Activated naive CD4-positive, alpha-beta T cell treated with anti-CD3 and anti-CD28 coated beads for 36 hours (primary cell): ENCODE measurements at regions of chr2 and their contacts with region 1.

Region 1: DNA sequence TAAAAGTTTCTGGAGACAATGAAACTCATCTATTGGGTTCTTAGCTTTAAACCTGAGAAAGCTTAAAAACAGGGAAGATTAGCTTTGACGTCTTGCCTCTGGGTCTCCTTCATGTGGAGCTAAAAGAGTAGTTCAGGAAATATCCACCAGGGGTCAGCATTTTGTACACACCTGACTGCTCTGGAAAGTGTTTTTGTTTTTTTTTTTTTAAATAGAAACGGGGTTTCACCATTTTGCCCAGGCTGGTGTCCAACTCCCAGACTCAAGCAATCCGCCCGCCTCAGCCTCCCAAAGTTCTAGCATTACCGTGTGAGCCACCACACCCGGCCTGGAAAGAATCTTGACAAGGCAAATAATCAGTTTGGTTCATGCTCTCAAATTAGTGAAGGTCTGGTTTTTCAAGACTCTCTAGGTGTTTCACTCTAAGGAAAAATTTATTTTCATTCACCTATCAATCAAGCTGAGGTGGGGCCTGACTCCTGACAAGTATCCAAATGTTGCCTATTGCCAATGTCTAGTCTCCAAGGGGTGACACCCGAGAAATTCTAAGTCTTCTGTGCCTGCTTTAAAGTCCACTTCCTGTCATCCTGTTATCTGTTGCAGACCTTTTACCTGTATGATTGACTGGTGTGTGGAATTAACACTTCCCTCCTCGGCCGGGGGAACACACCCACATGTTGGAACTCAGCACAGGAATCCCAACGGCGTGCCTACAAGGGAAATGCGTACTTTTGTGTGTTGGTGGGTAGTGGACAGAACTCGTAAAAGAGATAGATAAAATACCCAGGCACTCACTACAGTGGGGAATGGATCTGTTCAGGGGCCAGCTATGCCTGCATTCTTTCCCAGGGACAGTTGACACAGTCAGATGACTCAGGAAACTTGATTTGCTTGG is 11.3 kb downstream of the IL1RN start:
- DNase-seq: peak; percentile 65
- H3K4me3 Mint-ChIP-seq: peak overlapping the region; percentile 25
- H3K27ac Mint-ChIP-seq: peak overlapping the region; percentile 30
- H3K4me1 Mint-ChIP-seq: peaks cover 29% of the 10 kb centered on the region
- H3K27me3 Mint-ChIP-seq: no peaks in the 10 kb centered on the region

Region 2: GRCh38 chr2:112032689-112033465 is 1105.8 kb before region 1 on chr2:
- CTCF ChIA-PET with region 1: no interaction called
- intact Hi-C with region 1: no loop called
- DNase-seq: no peak
- H3K4me3 Mint-ChIP-seq: no peak overlapping the region
- H3K27ac Mint-ChIP-seq: no peak overlapping the region
- H3K4me1 Mint-ChIP-seq: peaks cover 6% of the 10 kb centered on the region
- H3K27me3 Mint-ChIP-seq: peaks cover 5% of the 10 kb centered on the region

Region 3: DNA sequence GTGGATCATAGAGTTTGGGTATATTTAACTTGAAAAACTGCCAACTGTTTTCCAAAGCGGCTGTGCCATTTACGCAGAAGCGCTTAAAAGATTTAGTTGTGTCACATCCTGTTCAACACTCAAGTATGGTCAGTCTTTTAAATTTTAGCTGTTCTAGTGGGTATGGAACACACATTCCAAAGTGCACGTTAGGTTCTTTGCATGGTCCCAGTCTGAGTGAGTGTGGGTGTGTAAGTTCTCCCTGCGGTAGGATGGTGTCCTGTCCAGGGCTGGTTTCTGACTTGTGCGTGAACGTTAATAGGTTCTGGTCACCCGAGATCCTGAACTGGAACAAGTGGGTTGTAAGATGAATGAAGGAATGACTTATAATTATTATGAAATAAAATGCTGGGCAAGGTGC is 189.2 kb before region 1 on chr2:
- CTCF ChIA-PET with region 1: no interaction called
- intact Hi-C with region 1: no loop called
- DNase-seq: no peak
- H3K4me3 Mint-ChIP-seq: no peak overlapping the region
- H3K27ac Mint-ChIP-seq: no peak overlapping the region
- H3K4me1 Mint-ChIP-seq: no peaks in the 10 kb centered on the region
- H3K27me3 Mint-ChIP-seq: no peaks in the 10 kb centered on the region

Region 4: GRCh38 chr2:113010073-113010472 is 128.6 kb before region 1 on chr2:
- CTCF ChIA-PET with region 1: no interaction called
- intact Hi-C with region 1: no loop called
- DNase-seq: no peak
- H3K4me3 Mint-ChIP-seq: no peak overlapping the region
- H3K27ac Mint-ChIP-seq: no peak overlapping the region
- H3K4me1 Mint-ChIP-seq: peaks cover 6% of the 10 kb centered on the region
- H3K27me3 Mint-ChIP-seq: no peaks in the 10 kb centered on the region

Region 5: DNA sequence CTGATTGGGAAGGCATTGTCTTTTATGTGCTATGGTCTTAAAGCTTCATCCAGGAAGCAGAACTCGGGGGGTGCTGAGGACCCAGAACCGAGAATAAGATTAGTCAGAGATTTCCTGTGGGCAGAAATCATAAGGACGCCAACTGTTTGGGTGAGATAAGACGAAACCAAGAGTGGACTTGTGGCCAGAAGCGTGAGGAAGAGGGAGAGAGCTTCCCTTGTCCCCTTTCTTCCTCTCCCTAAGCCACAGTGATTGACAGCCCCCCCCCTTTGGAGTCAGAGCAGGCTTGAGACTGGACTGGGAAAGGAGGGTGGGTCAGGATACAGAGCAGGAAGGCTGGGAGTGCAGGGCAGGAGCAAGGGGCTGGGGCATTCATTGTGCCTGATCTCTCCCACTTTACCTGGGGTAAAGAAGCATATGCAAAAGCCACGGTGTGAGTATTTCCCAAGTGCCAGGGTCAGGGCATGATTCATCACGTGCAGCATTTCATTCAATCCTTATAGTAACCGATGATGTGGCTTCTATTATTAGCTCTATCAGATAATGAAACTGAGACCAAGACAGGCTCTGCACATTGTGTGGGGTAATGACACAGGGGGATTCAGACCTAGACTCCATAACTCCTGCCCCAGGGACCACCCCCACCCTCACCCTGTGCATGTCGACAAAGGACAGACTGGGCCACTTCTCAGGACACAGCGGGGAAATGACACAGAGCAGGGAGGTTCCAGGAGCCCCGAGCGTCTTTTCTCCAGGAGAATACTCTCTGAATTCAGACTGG is 14.3 kb before region 1 on chr2:
- CTCF ChIA-PET with region 1: interaction called, 16 read pairs
- intact Hi-C with region 1: no loop called
- DNase-seq: peak; percentile 40
- H3K4me3 Mint-ChIP-seq: no peak overlapping the region
- H3K27ac Mint-ChIP-seq: no peak overlapping the region
- H3K4me1 Mint-ChIP-seq: peaks cover 23% of the 10 kb centered on the region
- H3K27me3 Mint-ChIP-seq: no peaks in the 10 kb centered on the region

Region 6: GRCh38 chr2:113173542-113174395 is 35.1 kb after region 1 on chr2 and contains the start of gene PSD4:
- CTCF ChIA-PET with region 1: interaction called, 95 read pairs
- intact Hi-C with region 1: loop called (anchors 1 kb)
- DNase-seq: peak; percentile 96
- H3K4me3 Mint-ChIP-seq: peak within 1 kb of the TSS; percentile 95
- H3K27ac Mint-ChIP-seq: peak within 1 kb of the TSS; percentile 97
- H3K4me1 Mint-ChIP-seq: peaks cover 77% of the 10 kb centered on the region
- H3K27me3 Mint-ChIP-seq: no peaks in the 10 kb centered on the region
- total RNA-seq, gene PSD4: 85.9 to 87.4 TPM

Region 7: GRCh38 chr2:113198790-113199612 is 60.3 kb after region 1 on chr2:
- CTCF ChIA-PET with region 1: interaction called, 157 read pairs
- intact Hi-C with region 1: loop called (anchors 1 kb)
- DNase-seq: peak; percentile 81
- H3K4me3 Mint-ChIP-seq: no peak overlapping the region
- H3K27ac Mint-ChIP-seq: peak overlapping the region; percentile 16
- H3K4me1 Mint-ChIP-seq: peaks cover 23% of the 10 kb centered on the region
- H3K27me3 Mint-ChIP-seq: no peaks in the 10 kb centered on the region

Region 8: DNA sequence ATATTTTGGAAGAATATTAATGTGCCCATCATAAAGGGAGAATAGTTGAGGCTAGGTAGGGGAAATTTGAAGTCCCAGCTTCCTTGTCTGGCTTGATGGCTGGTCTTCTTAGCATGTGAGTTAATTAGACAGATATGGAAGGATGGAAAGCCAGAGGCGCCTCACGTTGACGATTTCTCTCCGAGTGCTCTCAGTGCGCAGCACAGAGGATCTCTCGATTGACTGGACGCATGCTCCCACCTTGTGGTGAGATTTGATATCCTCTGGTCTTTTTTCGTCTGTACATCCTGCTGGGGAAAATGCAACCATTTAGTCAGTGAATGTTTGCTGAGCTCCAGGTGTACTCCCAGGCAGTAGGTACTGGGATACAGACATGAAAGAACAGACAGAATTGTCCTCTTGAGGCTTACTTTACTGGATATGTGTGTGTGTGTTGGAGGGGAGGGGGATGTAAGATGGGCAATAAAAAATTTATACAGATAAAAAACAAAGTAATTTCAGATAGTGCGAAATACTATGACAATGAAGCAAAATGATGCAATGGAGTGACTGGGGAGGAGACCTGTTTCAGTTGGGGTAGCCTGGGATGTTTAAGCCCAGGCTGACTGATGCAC is 231.9 kb after region 1 on chr2:
- CTCF ChIA-PET with region 1: interaction called, 29 read pairs
- intact Hi-C with region 1: loop called (anchors 1 kb)
- DNase-seq: peak; percentile 86
- H3K4me3 Mint-ChIP-seq: no peak overlapping the region
- H3K27ac Mint-ChIP-seq: no peak overlapping the region
- H3K4me1 Mint-ChIP-seq: peaks cover 5% of the 10 kb centered on the region
- H3K27me3 Mint-ChIP-seq: no peaks in the 10 kb centered on the region